Psoas muscle (tissue), 8 donors: ENCODE measurements at regions of chr9 and their contacts with region 1.

Region 1: GRCh38 chr9:13122756-13123369 is 156.6 kb downstream of the MPDZ start:
- DNase-seq: no peak
- ATAC-seq: no peak
- H3K4me3 ChIP-seq: no peak overlapping the region
- H3K27ac ChIP-seq: no peak overlapping the region
- H3K4me1 ChIP-seq: no peaks in the 10 kb centered on the region
- H3K27me3 ChIP-seq: no peaks in the 10 kb centered on the region
- CTCF ChIP-seq: no peak

Region 2: DNA sequence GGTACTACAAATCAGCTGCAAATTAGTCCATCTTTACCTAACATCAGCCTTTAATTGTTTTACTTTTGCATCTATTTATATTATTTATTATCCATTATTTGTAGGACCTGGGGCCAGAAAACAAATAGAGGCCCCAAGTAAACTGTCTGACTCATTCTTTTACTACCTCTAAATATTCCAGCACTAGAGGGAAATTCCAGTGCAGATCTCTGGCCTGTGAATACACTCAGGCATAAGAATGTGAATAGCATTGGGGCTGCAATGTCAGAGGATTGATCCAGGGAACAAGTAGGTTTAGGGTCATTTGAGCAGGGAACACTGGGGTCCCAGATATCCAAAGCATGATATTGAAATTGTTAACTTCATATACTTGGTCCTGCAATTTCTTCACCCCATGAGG is 606.3 kb before region 1 on chr9:
- intact Hi-C with region 1: no loop called
- DNase-seq: no peak
- ATAC-seq: no peak
- H3K4me3 ChIP-seq: no peak overlapping the region
- H3K27ac ChIP-seq: no peak overlapping the region
- H3K4me1 ChIP-seq: no peaks in the 10 kb centered on the region
- H3K27me3 ChIP-seq: peaks cover 0 to 4% (median 0%) of the 10 kb centered on the region in 3 donors
- CTCF ChIP-seq: no peak

Region 3: GRCh38 chr9:13109781-13110180 is 13.1 kb before region 1 on chr9:
- intact Hi-C with region 1: loop called in 1 of 2 experiments (anchors 2 kb)
- DNase-seq: no peak
- ATAC-seq: no peak
- H3K4me3 ChIP-seq: no peak overlapping the region
- H3K27ac ChIP-seq: no peak overlapping the region
- H3K4me1 ChIP-seq: peaks cover 3% of the 10 kb centered on the region
- H3K27me3 ChIP-seq: no peaks in the 10 kb centered on the region
- CTCF ChIP-seq: no peak